ENCODE measurements at regions of chr3 and their contacts with region 1.

Region 1: DNA sequence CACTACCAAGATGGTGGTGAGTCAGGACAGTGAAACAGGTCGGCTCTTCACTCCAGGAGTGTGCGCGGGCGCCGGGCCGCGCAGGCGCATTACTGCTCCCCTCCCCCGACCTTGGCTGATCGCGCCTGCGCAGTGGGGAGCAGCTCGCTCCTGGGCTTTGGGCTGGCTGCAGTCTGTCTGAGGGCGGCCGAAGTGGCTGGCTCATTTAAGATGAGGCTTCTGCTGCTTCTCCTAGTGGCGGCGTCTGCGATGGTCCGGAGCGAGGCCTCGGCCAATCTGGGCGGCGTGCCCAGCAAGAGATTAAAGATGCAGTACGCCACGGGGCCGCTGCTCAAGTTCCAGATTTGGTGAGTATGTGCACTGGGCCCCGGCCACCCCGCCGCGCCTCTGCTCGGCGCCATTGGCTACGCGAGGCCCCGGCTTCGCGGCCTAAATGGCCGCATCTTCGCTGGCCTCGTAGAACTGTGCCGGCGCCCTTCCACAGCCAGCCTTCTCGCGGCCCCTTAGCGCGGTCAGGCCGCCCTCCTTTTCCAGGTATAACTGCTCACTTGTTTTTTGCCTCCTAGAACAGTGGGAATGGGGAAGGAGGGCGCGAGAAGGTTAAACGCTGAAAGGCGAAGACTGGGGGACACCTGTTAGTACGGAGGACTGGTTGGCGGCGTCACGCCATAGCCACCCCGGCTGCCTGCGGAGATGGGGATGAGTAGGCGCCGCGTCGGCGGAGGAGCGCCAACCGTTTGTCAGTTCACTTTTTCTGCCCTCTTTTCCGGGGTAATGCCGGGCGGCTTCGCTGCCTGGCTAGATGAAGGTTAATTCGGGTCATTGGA is at the start of gene SELENOT:
- DNase-seq: peak; percentile 84 to 98 (median 91)
- ATAC-seq: peak; percentile 83 to 88 (median 85)
- H3K4me3 ChIP-seq: peak within 1 kb of the TSS; percentile 95 to 97
- H3K4me3 Mint-ChIP-seq: peak within 1 kb of the TSS; percentile 98 to 99 (median 99)
- H3K27ac ChIP-seq: peak within 1 kb of the TSS; percentile 98
- H3K27ac Mint-ChIP-seq: peak within 1 kb of the TSS; percentile 98 to 99
- H3K4me1 ChIP-seq: peaks cover 28 to 32% of the 10 kb centered on the region in 2 experiments
- H3K4me1 Mint-ChIP-seq: peaks cover 64 to 75% (median 72%) of the 10 kb centered on the region in 3 donors
- H3K27me3 ChIP-seq: no peaks in the 10 kb centered on the region
- H3K27me3 Mint-ChIP-seq: no peaks in the 10 kb centered on the region
- total RNA-seq, gene SELENOT: 64.1 to 85.9 (median 70.3) TPM

Region 2: DNA sequence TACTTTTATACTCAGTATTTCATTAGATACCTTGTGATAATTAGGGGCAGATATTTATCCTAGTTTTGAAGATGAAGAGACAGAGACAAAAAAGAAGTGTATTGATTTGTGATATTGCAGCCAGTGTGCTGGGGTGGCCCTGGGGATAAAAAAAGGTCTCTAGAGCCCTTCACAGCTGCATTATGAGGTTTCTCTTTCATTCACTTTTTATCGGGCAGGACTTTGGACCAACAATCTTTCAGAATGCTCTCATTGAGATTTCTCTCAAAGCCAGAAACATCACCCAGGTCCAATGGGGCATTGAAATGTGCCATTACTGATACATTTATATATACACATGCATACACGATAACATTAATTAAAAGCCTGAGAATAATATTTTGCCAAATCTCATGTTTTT is 20.7 kb before region 1 on chr3:
- CTCF ChIA-PET with region 1: interaction called in 1 of 2 experiments, 6 read pairs
- POLR2A ChIA-PET with region 1: interaction called in 1 of 2 experiments, 15 read pairs
- DNase-seq: no peak
- ATAC-seq: no peak
- H3K4me3 ChIP-seq: no peak overlapping the region
- H3K4me3 Mint-ChIP-seq: no peak overlapping the region
- H3K27ac ChIP-seq: no peak overlapping the region
- H3K27ac Mint-ChIP-seq: peak overlapping the region in 1 of 2 donors; percentile 66
- H3K4me1 ChIP-seq: no peaks in the 10 kb centered on the region
- H3K4me1 Mint-ChIP-seq: peaks cover 0 to 8% (median 4%) of the 10 kb centered on the region in 3 donors
- H3K27me3 ChIP-seq: no peaks in the 10 kb centered on the region
- H3K27me3 Mint-ChIP-seq: no peaks in the 10 kb centered on the region

Measured in T-cell (primary cell).